ENCODE measurements at regions of chr6 and their contacts with region 1.

Region 1: DNA sequence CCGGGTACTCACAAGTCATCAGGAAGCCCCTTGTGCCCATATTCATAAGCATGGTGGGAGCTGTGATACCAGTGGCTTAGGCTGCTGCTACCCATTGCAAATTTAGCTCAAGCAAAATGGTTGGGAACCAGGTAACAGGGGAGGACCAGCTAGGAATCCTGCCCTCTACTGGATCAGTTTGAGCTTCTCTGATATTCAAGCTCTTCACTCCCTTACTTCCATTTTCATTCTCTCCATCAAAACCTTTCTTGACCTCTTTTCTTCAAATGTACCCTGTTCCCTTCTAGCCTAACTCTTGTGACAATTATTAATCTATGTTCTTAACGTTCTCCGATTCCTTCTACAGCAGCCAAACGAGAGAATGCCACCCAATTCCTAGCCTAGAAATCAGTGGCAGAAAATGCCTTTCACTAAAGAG is 9.7 kb downstream of the NOL7 start:
- DNase-seq: peak; percentile 37
- ATAC-seq: peak; percentile 85
- H3K4me3 Mint-ChIP-seq: no peak overlapping the region
- H3K27ac Mint-ChIP-seq: peak overlapping the region; percentile 77
- H3K4me1 Mint-ChIP-seq: peaks cover 23% of the 10 kb centered on the region
- H3K27me3 Mint-ChIP-seq: no peaks in the 10 kb centered on the region
- CTCF ChIP-seq: peak; percentile 46

Region 2: DNA sequence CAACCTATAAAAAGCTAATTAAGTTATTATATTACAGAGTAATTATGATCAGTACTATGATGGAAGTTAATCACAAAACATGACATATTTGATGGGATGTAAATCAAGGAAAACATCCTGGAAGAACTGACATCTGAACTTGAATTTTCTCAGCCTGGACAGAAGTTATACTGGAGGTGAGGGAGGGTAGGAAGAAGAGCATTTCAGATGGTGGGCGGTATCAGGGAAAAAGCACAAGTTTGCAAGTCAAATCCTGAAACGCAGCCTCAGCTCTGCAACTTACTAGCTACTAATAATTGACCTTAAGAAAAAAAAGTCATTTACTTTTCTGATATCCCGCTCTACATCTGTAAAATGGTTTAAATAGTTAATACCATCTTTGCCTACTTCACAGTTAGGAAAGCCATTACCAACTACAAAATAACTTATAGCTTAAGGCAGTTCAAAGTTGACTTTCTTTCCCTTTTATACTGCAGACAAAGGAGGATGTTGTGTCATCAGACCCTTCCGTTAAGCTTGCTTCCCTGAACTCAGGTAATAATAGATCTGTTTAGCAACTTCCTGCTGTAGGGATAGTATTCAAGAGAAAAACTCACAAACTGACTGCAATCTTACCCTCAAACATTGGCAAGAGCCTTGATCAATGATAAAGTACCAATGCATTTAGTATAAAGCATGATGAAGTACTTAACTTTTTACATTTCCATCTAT is 11.2 kb after region 1 on chr6:
- CTCF ChIA-PET with region 1: interaction called, 27 read pairs
- POLR2A ChIA-PET with region 1: interaction called, 3 read pairs
- intact Hi-C with region 1: no loop called
- DNase-seq: no peak
- ATAC-seq: no peak
- H3K4me3 Mint-ChIP-seq: no peak overlapping the region
- H3K27ac Mint-ChIP-seq: peak overlapping the region; percentile 76
- H3K4me1 Mint-ChIP-seq: peaks cover 43% of the 10 kb centered on the region
- H3K27me3 Mint-ChIP-seq: no peaks in the 10 kb centered on the region
- CTCF ChIP-seq: no peak

Region 3: GRCh38 chr6:13702809-13703302 is 78.0 kb after region 1 on chr6:
- CTCF ChIA-PET with region 1: interaction called, 5 read pairs
- POLR2A ChIA-PET with region 1: no interaction called
- intact Hi-C with region 1: loop called (anchors 5 kb)
- DNase-seq: no peak
- ATAC-seq: peak; percentile 30
- H3K4me3 Mint-ChIP-seq: no peak overlapping the region
- H3K27ac Mint-ChIP-seq: no peak overlapping the region
- H3K4me1 Mint-ChIP-seq: peaks cover 27% of the 10 kb centered on the region
- H3K27me3 Mint-ChIP-seq: no peaks in the 10 kb centered on the region
- CTCF ChIP-seq: no peak

Measured in activated CD8-positive, alpha-beta T cell treated with anti-CD3 and anti-CD28 coated beads for 36 hours (primary cell).